BJ (cell line): ENCODE measurements at regions of chr16 and their contacts with region 1.

Region 1: DNA sequence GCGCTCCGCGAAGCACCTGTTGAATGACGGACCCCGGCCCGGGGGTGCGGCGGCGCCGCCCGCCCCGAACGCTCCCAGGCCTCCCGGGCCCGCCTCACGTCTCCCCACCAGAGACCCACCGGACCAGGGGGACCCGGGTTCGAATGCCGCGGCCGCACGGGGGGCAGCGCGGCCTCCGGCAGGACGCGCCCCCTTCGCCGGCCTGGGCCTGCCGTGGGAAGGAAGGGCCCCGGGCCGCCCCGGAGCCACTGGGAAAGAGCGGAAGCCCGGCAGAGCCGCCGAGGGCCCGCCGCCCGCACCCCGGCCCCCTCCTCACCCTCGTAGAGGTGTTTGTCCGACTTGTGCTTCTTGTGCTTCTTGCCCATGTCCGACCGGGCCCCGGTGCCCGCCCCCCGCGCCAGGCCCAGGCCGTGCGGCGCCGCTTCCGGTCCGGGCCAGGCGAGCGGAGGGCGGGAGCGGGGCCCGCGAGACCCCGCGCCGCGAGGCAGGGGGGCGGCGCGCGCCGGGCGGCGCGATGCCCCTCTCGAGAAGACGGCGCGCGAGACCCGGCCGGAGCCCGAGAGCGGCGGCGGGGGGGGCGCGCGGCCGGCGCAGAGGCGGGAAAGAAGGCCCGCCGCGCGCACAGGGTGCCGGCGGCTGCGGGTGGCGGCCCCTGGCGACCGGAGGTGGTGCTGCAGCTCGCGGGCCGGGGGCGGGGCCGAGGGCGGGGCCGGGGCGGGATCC is at the start of gene BRD7:
- DNase-seq: no peak
- H3K4me3 ChIP-seq: peak within 1 kb of the TSS; percentile 77
- H3K27me3 ChIP-seq: peaks cover 3% of the 10 kb centered on the region; the same call in 1 of the 2 replicates
- CTCF ChIP-seq: no peak
- polyA plus RNA-seq, gene BRD7: 30.3 and 51.7 TPM in 2 replicates

Region 2: DNA sequence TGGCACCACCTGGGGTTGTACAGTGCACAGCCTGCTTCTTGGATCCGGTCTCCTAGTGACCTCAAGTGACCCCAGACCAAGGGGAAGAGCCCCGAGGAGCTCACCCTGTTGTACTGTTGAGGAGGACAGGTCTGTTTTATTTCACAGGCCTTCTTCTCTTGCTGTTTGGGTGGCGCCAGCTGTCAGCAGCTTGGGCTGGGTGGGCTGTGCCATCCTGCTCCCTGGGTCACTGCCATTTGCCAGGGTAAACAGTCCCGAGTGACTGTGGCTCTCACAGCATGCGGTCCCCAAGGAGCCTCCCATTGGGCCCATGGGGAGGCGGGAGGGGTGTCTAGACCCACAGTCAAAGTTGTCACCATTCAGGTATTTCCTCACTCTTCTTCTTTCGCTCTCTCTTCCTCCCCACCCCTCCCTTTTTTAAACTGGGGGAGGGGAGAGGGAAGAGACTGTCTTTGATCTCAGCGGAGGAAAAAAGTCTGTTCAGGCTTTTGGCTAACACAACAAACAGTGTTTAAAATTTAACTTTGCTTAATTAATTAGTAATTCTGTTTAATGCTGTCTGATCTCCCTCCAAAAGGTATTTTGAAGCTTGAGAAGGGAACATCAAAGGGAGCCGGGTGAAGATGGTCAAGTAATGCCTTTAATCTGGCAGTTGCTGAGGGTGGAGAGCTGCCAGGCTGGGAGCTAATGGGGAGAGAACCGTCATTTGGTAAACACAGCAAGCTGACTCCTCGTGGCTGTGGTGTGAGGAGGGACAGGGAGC is 248.5 kb after region 1 on chr16:
- CTCF ChIA-PET with region 1: no interaction called
- POLR2A ChIA-PET with region 1: interaction called, 17 read pairs
- DNase-seq: no peak
- H3K4me3 ChIP-seq: no peak overlapping the region
- H3K27me3 ChIP-seq: peaks cover 8% of the 10 kb centered on the region
- CTCF ChIP-seq: no peak

Region 3: GRCh38 chr16:50771366-50771765 is 402.8 kb after region 1 on chr16:
- CTCF ChIA-PET with region 1: no interaction called
- POLR2A ChIA-PET with region 1: interaction called, 12 read pairs
- DNase-seq: peak; percentile 27
- H3K4me3 ChIP-seq: no peak overlapping the region
- H3K27me3 ChIP-seq: no peaks in the 10 kb centered on the region
- CTCF ChIP-seq: no peak